Posterior vena cava (tissue), 2 donors: ENCODE measurements at regions of chr18 and their contacts with region 1.

Region 1: DNA sequence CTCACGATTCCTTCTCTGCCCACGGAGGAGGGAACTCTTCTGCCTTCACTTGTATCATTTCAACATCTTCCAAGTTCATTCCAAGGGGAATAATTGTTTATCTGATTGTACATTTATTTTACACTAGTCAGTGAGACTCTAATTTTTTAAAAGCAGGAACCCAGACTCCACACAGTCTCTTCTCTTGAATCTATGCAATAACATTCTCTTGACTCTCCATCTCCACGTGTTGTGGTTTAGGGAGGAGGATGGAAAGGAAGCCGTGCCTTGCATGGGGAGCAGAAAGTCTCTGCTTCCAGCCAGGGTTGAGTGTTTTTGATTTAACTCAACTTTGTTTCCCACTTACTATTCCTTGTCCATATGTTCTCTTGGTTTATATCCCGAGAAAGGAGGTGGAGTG is 131.1 kb upstream of the RIOK3 start:
- DNase-seq: no peak

Region 2: DNA sequence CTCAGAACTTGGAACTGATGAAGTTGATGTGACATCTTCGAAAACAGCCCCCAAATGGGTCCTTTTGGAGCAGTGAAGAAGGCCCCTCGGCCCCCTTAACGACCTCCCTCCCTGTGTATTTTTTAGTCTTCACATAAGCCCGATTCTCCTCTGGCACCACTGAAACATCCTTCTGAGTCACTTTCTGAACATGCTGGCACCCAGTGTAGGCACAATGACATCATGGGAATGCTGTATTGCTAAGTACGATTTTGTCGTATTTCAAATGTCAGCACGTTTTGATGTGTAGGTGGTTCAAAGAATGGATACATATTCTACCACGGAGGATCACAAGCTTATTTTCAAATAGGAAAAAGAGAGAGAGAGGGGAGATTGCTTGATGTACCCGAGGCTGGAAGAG is 19.4 kb after region 1 on chr18:
- intact Hi-C with region 1: loop called in 1 of 2 experiments (anchors 2 kb)
- DNase-seq: no peak

Region 3: DNA sequence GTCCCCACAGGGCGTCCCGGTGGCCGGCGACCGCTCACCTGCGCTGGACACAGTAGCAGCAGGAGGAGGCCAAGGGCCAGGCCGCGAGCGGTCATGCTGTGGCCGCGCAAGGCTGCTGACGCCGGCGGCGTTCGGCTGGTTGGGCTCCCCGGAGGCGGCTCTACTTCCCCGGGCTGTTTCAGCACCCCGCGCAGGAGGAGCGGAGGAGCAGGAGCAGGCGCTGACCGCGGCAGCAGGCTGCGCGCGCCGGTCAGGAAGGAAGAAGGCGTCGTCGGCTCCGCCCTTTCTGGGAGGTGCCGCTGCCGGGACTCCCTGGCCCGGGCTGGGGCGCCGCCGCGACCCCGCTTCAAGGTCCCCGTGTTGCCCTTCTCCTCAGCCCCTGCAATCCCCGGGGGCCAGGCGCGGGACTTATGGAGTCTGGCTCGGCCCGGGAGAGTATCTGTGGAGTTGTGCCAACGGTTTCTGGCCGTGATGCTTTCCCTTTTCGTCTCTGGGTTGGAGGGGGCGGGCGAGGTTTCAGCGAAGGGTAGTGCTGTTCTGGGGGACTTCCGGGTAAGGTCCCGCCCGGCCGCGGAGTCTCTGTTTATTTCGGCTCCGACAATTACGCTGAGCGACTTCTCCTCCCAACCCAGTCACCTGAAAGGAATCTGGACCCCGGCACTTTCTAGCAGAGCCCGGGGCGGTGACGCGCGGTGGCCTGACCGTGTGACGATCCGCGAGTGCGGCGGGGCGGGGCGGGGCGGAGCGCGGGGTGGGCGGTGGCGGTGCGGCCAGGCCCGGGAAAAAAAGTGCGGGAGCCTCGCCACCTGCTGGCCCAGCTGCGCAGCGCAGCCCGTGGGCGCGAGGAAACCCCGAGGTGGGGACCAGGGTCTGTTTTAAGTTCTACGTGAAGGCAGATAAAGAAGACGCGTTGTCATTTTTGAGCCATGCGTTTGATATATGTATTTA is 264.5 kb after region 1 on chr18 and contains the start of gene NPC1:
- intact Hi-C with region 1: no loop called
- DNase-seq: peak; percentile 98
- total RNA-seq, gene NPC1: 36.2 to 72.1 TPM

Region 4: GRCh38 chr18:24543805-24544498 is 1222.0 kb after region 1 on chr18:
- intact Hi-C with region 1: loop called in 1 of 2 experiments (anchors 10 kb)
- DNase-seq: no peak